T-cell (primary cell): ENCODE measurements at regions of chr3 and their contacts with region 1.

Region 1: GRCh38 chr3:136861890-136862616 is at the start of gene NCK1:
- DNase-seq: peak; percentile 95 to 100 (median 99)
- ATAC-seq: peak; percentile 94 to 97 (median 96)
- H3K4me3 ChIP-seq: peak within 1 kb of the TSS; percentile 84 to 95
- H3K4me3 Mint-ChIP-seq: peak within 1 kb of the TSS; percentile 89 to 94 (median 90)
- H3K27ac ChIP-seq: peak within 1 kb of the TSS; percentile 89
- H3K27ac Mint-ChIP-seq: peak within 1 kb of the TSS; percentile 97 to 98
- H3K4me1 ChIP-seq: peaks cover 14 to 31% of the 10 kb centered on the region in 2 experiments
- H3K4me1 Mint-ChIP-seq: peaks cover 39 to 67% (median 59%) of the 10 kb centered on the region in 3 donors
- H3K27me3 ChIP-seq: no peaks in the 10 kb centered on the region
- H3K27me3 Mint-ChIP-seq: no peaks in the 10 kb centered on the region
- total RNA-seq, gene NCK1: 46.9 to 65.3 (median 50.9) TPM

Region 2: DNA sequence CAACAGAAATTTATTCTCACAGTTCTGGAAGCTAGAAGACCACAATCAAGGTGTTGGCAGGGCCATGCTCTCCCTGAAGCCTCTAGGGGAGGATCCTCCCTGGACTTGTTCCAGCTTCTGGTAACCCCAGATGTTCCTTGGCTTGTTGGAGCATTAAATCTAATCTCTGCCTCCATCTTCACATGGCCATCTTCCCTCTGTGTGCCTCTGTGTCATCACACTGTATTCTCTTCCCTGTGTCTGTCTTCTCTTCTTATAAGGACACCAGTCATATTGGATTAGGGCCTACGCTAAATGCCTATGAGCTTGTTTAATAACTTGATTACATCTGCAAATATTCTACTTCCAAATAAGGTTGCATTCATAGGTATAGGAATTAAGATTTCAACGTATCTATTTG is 219.3 kb before region 1 on chr3:
- CTCF ChIA-PET with region 1: no interaction called
- POLR2A ChIA-PET with region 1: interaction called in 1 of 2 experiments, 13 read pairs
- DNase-seq: no peak
- ATAC-seq: no peak
- H3K4me3 ChIP-seq: no peak overlapping the region
- H3K4me3 Mint-ChIP-seq: no peak overlapping the region
- H3K27ac ChIP-seq: no peak overlapping the region
- H3K27ac Mint-ChIP-seq: no peak overlapping the region
- H3K4me1 ChIP-seq: peaks cover 0 to 2% of the 10 kb centered on the region in 2 experiments
- H3K4me1 Mint-ChIP-seq: peaks cover 43 to 48% (median 47%) of the 10 kb centered on the region in 3 donors
- H3K27me3 ChIP-seq: no peaks in the 10 kb centered on the region
- H3K27me3 Mint-ChIP-seq: no peaks in the 10 kb centered on the region

Region 3: DNA sequence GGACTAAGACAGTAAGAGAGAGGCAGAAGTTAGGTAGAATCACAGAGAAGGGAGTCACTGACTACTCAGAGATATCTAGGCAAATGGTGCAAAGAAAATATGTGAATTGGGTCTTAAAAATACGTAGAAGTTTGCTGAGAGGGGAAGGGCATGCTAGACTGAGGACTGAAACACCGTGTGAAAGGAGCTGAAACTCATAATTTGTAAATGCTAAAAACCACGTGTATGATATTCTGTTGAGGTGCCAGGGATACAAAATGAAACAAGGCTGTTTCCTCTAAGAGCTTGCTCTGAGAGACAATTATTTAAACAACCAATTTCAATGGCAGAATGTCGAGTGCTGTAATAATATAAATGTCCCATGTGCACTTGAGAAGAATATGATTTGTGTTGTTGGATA is 47.1 kb after region 1 on chr3:
- CTCF ChIA-PET with region 1: interaction called in 1 of 2 experiments, 12 read pairs
- POLR2A ChIA-PET with region 1: interaction called, 3 to 5 read pairs
- DNase-seq: peak in 1 of 35 experiments; percentile 21
- ATAC-seq: peak in 2 of 4 experiments; percentile 17 to 34
- H3K4me3 ChIP-seq: no peak overlapping the region
- H3K4me3 Mint-ChIP-seq: peak overlapping the region; percentile 7 to 24 (median 18)
- H3K27ac ChIP-seq: peak overlapping the region; percentile 60
- H3K27ac Mint-ChIP-seq: peak overlapping the region; percentile 76 to 92
- H3K4me1 ChIP-seq: peaks cover 22 to 29% of the 10 kb centered on the region in 2 experiments
- H3K4me1 Mint-ChIP-seq: peaks cover 83 to 88% (median 86%) of the 10 kb centered on the region in 3 donors
- H3K27me3 ChIP-seq: no peaks in the 10 kb centered on the region
- H3K27me3 Mint-ChIP-seq: no peaks in the 10 kb centered on the region

Region 4: GRCh38 chr3:136919799-136920580 is 57.9 kb after region 1 on chr3:
- CTCF ChIA-PET with region 1: interaction called, 3 to 11 read pairs
- POLR2A ChIA-PET with region 1: interaction called in 1 of 2 experiments, 18 read pairs
- DNase-seq: peak in 14 of 35 experiments; percentile 4 to 81 (median 18)
- ATAC-seq: peak; percentile 85 to 97 (median 94)
- H3K4me3 ChIP-seq: no peak overlapping the region
- H3K4me3 Mint-ChIP-seq: peak overlapping the region; percentile 41 to 46 (median 46)
- H3K27ac ChIP-seq: peak overlapping the region; percentile 86
- H3K27ac Mint-ChIP-seq: peak overlapping the region; percentile 72 to 97
- H3K4me1 ChIP-seq: peaks cover 22 to 33% of the 10 kb centered on the region in 2 experiments
- H3K4me1 Mint-ChIP-seq: peaks cover 88 to 92% (median 89%) of the 10 kb centered on the region in 3 donors
- H3K27me3 ChIP-seq: no peaks in the 10 kb centered on the region
- H3K27me3 Mint-ChIP-seq: no peaks in the 10 kb centered on the region

Region 5: DNA sequence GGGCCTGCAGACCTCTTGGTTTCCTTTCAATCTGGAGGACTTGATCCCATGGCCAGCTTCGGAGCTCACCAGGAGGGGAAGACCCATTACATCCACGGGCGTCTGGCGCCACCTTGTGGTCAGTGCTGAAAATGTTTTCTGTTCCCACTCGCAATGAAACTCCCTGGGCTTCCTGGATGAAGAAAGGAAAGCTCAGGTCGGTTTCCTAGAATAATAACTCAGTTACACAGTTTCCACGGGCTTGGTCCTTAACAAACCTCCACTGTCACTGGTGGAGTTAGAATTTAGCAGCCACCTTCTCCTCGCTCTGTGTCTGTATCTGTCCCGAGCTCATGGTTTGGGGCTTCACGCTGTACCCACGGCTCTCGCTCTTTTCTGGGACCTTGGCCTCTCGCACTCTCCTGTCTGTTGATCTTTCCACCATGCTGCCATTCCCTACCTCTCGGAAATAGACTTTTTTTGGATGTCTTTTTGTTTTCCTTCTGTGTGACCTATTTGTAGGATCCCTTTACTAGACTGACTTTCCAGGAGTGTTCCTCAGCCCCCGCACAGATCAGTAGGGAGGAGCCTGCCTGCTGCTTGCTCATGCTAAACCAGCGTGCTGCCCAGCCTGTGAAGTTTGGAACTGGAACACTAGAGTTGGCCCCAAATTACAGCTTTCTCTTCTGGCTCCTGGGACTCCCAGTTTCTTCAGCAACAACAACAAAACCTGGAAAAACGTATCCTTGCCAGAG is 152.1 kb after region 1 on chr3:
- CTCF ChIA-PET with region 1: interaction called, 4 to 14 read pairs
- POLR2A ChIA-PET with region 1: interaction called in 1 of 2 experiments, 5 read pairs
- DNase-seq: peak; percentile 43 to 91 (median 77)
- ATAC-seq: peak; percentile 81 to 91 (median 87)
- H3K4me3 ChIP-seq: peak overlapping the region; percentile 1 to 32
- H3K4me3 Mint-ChIP-seq: peak overlapping the region; percentile 67 to 80 (median 71)
- H3K27ac ChIP-seq: no peak overlapping the region
- H3K27ac Mint-ChIP-seq: no peak overlapping the region
- H3K4me1 ChIP-seq: peaks cover 0 to 9% of the 10 kb centered on the region in 2 experiments
- H3K4me1 Mint-ChIP-seq: peaks cover 7 to 11% (median 10%) of the 10 kb centered on the region in 3 donors
- H3K27me3 ChIP-seq: no peaks in the 10 kb centered on the region
- H3K27me3 Mint-ChIP-seq: peaks cover 2 to 3% of the 10 kb centered on the region in 2 donors

Region 6: GRCh38 chr3:138165061-138165460 is 1303.0 kb after region 1 on chr3:
- CTCF ChIA-PET with region 1: no interaction called
- POLR2A ChIA-PET with region 1: no interaction called
- DNase-seq: no peak
- ATAC-seq: no peak
- H3K4me3 ChIP-seq: no peak overlapping the region
- H3K4me3 Mint-ChIP-seq: no peak overlapping the region
- H3K27ac ChIP-seq: no peak overlapping the region
- H3K27ac Mint-ChIP-seq: no peak overlapping the region
- H3K4me1 ChIP-seq: no peaks in the 10 kb centered on the region
- H3K4me1 Mint-ChIP-seq: peaks cover 10 to 17% (median 15%) of the 10 kb centered on the region in 3 donors
- H3K27me3 ChIP-seq: no peaks in the 10 kb centered on the region
- H3K27me3 Mint-ChIP-seq: no peaks in the 10 kb centered on the region